ENCODE measurements at regions of chr13 and their contacts with region 1.

Region 1: DNA sequence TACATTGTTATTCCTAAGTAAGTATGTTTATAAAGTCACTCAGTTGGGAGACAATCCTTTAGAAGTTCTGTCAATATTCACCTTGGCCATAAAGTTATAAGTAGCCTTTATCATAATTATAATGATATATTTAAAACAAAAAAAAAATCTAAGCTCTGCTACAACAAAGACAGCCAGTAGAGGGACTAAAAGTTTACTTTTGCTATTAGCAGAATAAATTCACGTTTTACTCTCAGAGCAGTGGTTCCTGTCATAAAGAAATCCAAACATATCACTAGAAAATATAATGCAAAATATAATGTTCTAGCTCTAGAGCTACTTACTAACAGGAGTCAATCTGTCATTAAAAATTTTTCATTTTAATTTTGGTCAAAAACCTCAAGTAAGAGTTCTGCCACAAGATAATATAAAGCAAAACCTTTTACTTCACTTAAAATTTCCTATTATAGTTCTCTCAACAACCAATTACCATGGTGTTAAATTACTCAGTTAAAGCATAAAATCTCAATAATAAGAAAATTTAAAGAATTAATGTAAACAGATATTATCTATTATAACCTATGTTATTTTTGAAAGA is 17.7 kb downstream of the INTS6 start:
- DNase-seq: peak; percentile 33

Region 2: DNA sequence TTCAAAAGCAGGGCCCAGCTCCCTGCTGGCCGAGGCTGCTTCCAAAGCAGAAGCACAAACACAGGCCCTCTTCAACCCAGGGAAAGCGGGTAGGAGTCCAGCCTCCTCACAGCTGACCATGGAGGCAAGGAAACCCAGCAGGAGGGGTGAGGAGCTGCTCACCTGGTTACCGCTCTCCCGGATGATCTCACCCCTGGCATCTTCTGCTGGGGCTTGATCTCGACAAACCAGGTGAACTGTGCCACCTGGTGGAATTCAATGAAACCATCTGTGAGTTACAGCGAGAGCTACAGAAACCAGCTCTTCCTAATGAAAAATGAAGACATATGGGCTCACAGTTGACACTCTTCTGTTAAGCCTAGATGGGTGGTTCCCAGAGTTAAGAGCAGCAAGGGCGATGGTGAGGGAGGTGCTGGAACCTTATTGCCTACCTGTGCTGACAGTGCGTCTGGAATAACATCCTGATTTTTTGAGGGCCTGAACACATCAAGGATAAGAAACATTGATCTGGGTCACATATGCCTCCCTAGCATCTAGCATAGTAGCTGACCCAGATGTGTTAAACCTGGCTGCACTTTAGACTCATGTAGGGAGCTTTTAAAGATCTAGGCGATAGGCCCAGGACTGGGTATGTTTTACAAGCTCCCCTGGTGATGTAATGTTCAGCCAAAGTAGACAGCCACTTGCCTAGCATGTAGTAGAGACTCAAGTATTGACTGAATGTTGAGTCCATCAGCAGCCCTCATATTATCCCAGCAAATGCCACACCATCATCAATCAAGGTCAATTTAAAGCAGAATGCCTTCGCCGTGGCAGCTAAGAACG is 362.8 kb after region 1 on chr13:
- in situ Hi-C with region 1: loop called (anchors 25 kb)
- DNase-seq: peak; percentile 76